ENCODE measurements at regions of chr3 and their contacts with region 1.

Region 1: DNA sequence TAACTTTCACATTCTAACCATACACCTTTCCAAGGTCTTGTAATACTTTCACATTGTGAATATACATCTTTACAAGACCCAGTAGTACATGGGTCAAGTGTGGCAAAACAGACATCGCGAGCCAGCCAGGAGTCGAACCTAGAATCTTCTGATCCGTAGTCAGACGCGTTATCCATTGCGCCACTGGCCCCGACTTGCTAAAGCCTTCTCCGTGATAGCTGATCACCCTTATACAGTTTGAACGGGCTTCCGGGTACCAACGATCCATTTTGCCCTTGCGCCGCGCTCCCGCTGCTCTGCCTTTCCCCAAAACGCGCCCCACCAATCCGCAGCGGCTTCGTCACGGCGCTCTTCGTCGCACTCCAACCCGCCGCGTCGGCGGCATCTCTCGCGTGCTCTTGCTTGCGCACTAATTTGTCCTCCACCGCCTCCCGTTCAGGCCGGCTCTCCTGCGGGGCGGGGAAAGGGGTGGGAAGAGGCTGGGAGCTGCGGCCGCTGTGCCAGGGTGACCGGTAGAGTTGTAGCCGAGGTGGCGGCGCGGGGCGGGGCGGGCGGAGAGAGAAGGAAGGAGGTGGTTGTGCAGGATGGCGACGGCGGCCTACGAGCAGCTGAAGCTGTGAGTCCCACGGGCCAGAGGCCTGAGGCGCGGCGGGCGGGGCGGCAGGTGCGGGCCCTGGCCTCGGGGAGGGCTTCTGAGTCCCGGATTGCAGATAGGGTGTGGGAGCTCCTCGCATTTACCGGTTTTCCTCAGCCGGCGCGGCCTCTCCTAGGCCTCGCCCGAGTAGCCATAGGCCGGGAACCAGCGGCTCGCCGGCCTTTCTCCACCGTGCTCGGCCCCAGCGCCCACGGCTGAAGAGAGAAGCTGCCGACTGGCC is at the start of gene SACM1L:
- DNase-seq: peak; percentile 98
- ATAC-seq: peak; percentile 85
- H3K4me3 Mint-ChIP-seq: peak within 1 kb of the TSS; percentile 79
- H3K27ac Mint-ChIP-seq: peak within 1 kb of the TSS; percentile 97
- H3K4me1 Mint-ChIP-seq: peaks cover 46% of the 10 kb centered on the region
- H3K27me3 Mint-ChIP-seq: peaks cover 2% of the 10 kb centered on the region
- total RNA-seq, gene SACM1L: 34.2 to 51.8 TPM

Region 2: DNA sequence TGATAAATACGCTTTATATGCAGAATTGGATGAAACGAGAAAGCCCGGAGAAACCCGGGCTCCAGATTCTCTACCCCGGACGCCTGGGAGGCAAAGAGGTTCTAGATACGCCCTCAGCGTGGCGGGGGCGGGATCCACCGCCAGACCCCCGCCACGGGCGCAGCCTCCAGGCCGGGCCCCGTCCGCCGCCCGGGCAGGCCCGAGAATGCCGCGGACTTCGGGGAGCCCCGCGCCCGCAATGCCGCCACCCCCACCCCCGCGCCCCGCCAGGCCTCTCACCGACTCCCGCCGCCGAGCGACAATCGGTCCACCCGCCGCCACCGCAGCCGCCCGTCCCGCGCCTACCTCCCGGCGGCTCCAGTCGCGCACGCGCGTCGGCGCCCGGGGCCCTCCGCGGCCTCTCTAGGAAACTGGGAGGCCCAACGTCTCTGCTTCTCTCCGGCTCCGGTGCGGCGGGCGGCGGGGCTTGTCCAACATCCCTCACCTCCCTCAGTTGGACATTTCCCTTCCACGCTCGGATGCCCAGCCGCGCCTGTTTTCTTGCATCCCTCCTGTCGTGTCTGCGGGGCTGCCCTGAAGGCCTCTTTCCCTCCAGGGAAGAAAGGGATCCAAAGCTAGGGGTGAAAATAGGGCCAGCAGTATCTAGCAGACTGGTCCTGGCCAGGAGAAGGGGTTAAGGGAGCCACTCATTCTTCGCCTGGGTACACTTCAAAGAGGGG is 1211.6 kb before region 1 on chr3 and contains the start of gene ZNF445:
- CTCF ChIA-PET with region 1: no interaction called
- POLR2A ChIA-PET with region 1: no interaction called
- intact Hi-C with region 1: loop called in 1 of 2 experiments (anchors 10 kb)
- DNase-seq: peak; percentile 87
- ATAC-seq: peak; percentile 89
- H3K4me3 Mint-ChIP-seq: peak within 1 kb of the TSS; percentile 75
- H3K27ac Mint-ChIP-seq: peak within 1 kb of the TSS; percentile 88
- H3K4me1 Mint-ChIP-seq: peaks cover 33% of the 10 kb centered on the region
- H3K27me3 Mint-ChIP-seq: no peaks in the 10 kb centered on the region
- total RNA-seq, gene ZNF445: 13.2 to 16.3 TPM

Region 3: DNA sequence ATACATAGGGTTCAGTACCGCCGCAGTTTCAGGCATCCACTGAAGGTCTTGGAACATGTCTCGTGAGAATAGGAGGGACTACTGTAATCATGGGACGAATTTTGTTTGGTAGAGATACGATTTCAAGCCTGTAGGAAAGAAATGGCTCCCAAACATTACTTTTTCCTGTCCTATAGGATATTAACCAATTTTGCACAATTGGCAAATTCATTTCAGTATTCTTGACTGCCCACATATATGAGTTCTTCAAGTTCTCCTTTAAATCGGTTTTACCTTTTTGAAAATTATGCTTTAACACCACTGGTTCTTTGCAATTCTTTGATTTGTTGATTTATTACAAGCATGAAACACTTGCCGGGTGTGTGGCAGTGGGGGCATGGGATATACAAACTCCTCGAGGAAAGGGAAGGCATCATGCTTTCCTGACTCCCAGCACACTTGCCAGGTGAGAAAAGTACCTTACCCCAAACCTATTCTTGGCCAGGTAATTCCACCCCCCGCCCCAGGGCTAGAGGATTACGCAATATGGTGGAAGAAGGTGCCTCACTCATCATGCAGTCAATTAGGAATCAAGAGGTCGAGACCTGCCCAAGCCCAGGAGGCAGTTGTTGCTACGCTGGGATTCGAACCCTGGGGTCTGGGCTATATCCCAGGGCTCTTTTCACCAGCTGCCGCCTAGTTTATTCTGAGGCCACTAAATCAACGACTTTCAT is 301.3 kb before region 1 on chr3:
- CTCF ChIA-PET with region 1: no interaction called
- POLR2A ChIA-PET with region 1: no interaction called
- intact Hi-C with region 1: loop called in 1 of 2 experiments (anchors 1 kb)
- DNase-seq: no peak
- ATAC-seq: peak; percentile 8
- H3K4me3 Mint-ChIP-seq: peak overlapping the region; percentile 85
- H3K27ac Mint-ChIP-seq: peak overlapping the region; percentile 51
- H3K4me1 Mint-ChIP-seq: peaks cover 13% of the 10 kb centered on the region
- H3K27me3 Mint-ChIP-seq: peaks cover 1% of the 10 kb centered on the region

Region 4: DNA sequence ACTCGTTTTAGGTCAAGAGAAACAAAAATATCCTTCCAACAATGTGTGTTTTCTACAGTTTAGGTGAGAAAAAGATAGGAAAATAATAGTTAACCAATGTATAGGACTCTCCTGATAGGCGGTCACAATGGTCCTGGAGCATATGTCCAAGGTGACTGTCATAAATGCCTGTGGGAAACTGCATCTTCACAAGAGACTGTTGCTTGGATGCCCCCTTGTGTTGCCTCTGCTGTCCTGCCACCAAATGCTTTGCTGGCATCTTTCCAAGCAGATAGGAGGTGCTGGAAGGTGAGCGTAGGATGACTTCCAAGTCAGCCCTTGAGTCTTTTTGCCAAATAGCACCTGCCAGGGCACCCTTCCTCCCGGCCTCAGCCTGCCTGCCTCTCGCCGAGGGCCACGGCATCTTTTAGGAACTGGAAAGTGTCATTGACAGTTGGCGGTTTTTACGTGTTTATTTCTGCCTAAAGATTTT is 24.0 kb before region 1 on chr3:
- CTCF ChIA-PET with region 1: interaction called, 24 read pairs
- POLR2A ChIA-PET with region 1: interaction called, 4 read pairs
- intact Hi-C with region 1: loop called (anchors 1 kb)
- DNase-seq: peak; percentile 76
- ATAC-seq: peak; percentile 23
- H3K4me3 Mint-ChIP-seq: peak overlapping the region; percentile 67
- H3K27ac Mint-ChIP-seq: peak overlapping the region; percentile 68
- H3K4me1 Mint-ChIP-seq: peaks cover 54% of the 10 kb centered on the region
- H3K27me3 Mint-ChIP-seq: no peaks in the 10 kb centered on the region

Region 5: DNA sequence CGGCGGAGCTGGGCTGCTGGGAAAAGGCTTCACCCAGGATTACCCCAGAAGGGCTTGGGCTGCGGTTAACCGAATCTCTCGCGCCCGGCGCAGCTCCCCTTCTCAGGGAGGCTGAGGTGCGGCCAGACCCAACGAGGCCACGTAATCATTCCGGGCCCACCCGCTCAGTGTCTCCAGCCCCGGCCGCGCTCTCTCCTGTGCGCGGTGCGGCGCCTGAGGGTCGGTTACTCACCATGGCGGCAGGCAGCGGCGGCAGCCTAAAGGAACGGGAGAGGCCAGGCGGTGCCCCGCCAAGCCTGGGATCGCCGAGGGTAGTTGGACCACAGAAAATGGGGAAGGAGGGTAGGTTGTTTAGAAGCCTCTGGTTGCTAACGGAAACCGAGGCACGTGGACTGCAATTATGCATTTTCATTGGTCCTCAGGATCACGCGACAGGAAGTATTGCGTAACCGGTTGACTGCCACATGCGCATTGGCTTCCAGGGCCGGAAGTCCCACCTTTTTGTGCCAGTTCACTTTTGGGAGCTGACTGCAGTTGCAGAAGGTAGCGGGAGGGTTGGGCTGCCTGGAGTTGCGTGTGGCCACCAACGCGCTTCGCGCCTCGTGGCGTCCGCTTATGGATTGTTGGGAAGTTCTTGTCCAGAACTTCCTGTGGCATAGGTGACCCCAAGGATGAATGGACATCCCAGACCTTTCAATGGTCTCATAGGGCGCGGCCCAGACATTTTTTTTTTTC is 152.8 kb after region 1 on chr3 and contains the start of gene LZTFL1:
- CTCF ChIA-PET with region 1: no interaction called
- POLR2A ChIA-PET with region 1: no interaction called
- intact Hi-C with region 1: loop called in 1 of 2 experiments (anchors 5 kb)
- DNase-seq: peak; percentile 94
- ATAC-seq: peak; percentile 89
- H3K4me3 Mint-ChIP-seq: peak within 1 kb of the TSS; percentile 87
- H3K27ac Mint-ChIP-seq: peak within 1 kb of the TSS; percentile 82
- H3K4me1 Mint-ChIP-seq: peaks cover 14% of the 10 kb centered on the region
- H3K27me3 Mint-ChIP-seq: no peaks in the 10 kb centered on the region
- total RNA-seq, gene LZTFL1: 4.5 to 6.6 TPM

Region 6: GRCh38 chr3:45874677-45875346 is 185.7 kb after region 1 on chr3:
- CTCF ChIA-PET with region 1: no interaction called
- POLR2A ChIA-PET with region 1: no interaction called
- intact Hi-C with region 1: no loop called
- DNase-seq: no peak
- ATAC-seq: no peak
- H3K4me3 Mint-ChIP-seq: no peak overlapping the region
- H3K27ac Mint-ChIP-seq: no peak overlapping the region
- H3K4me1 Mint-ChIP-seq: peaks cover 20% of the 10 kb centered on the region
- H3K27me3 Mint-ChIP-seq: peaks cover 48% of the 10 kb centered on the region